ENCODE measurements at regions of chr11 and their contacts with region 1.

Region 1: GRCh38 chr11:10307442-10308207 is 2.8 kb downstream of the ADM start:
- DNase-seq: peak; percentile 84
- ATAC-seq: peak; percentile 41
- H3K4me3 ChIP-seq: peak overlapping the region; percentile 85 to 93
- H3K27ac ChIP-seq: peak overlapping the region; percentile 97
- H3K4me1 ChIP-seq: peaks cover 42 to 64% of the 10 kb centered on the region in 2 experiments
- H3K27me3 ChIP-seq: no peaks in the 10 kb centered on the region
- CTCF ChIP-seq: peak in 2 of 3 experiments; percentile 94 to 98; a peak in 4 of 6 replicates
- POLR2A ChIP-seq: peak; percentile 11
- RAD21 ChIP-seq: no peak

Region 2: GRCh38 chr11:9757809-9758636 is 549.6 kb before region 1 on chr11:
- CTCF ChIA-PET with region 1: interaction called, 18 read pairs
- POLR2A ChIA-PET with region 1: interaction called, 37 read pairs
- RAD21 ChIA-PET with region 1: interaction called, 6 read pairs
- intact Hi-C with region 1: loop called (anchors 1 kb)
- DNase-seq: peak; percentile 42
- ATAC-seq: peak; percentile 59
- H3K4me3 ChIP-seq: peak overlapping the region; percentile 71 to 74
- H3K27ac ChIP-seq: peak overlapping the region; percentile 95
- H3K4me1 ChIP-seq: peaks cover 17 to 34% of the 10 kb centered on the region in 2 experiments
- H3K27me3 ChIP-seq: no peaks in the 10 kb centered on the region
- CTCF ChIP-seq: peak in 2 of 3 experiments; percentile 55 to 66; a peak in 4 of 6 replicates
- POLR2A ChIP-seq: no peak
- RAD21 ChIP-seq: peak; percentile 65

Region 3: DNA sequence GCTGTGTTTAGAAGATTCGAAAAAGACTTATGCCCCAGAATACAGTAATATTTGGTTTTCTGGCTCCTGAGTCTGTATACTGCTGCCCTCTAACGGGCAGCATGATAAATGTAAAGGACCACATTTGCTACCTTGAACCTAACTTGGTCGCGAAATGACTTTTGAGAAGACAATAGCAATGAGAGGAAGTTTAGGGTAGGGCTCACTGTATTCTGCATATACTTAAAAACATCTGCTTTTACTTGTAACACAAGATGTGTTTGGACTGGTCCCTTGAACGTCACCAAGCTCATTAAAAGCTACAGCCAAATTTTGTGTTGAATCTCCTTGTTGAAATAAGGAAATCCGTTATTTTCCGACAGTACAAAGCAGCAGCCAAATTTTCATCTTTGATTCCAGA is 334.6 kb before region 1 on chr11:
- CTCF ChIA-PET with region 1: interaction called, 4 read pairs
- POLR2A ChIA-PET with region 1: interaction called, 4 read pairs
- RAD21 ChIA-PET with region 1: no interaction called
- intact Hi-C with region 1: loop called (anchors 5 kb)
- DNase-seq: peak; percentile 16
- ATAC-seq: peak; percentile 67; the same call in 1 of the 2 replicates
- H3K4me3 ChIP-seq: no peak overlapping the region
- H3K27ac ChIP-seq: no peak overlapping the region
- H3K4me1 ChIP-seq: no peaks in the 10 kb centered on the region
- H3K27me3 ChIP-seq: no peaks in the 10 kb centered on the region
- CTCF ChIP-seq: peak; percentile 66 to 77 (median 69); a peak in 5 of 6 replicates
- POLR2A ChIP-seq: no peak
- RAD21 ChIP-seq: peak; percentile 80

Region 4: GRCh38 chr11:10122326-10123197 is 185.1 kb before region 1 on chr11:
- CTCF ChIA-PET with region 1: no interaction called
- POLR2A ChIA-PET with region 1: no interaction called
- RAD21 ChIA-PET with region 1: no interaction called
- intact Hi-C with region 1: no loop called
- DNase-seq: peak; percentile 77
- ATAC-seq: peak; percentile 99
- H3K4me3 ChIP-seq: peak overlapping the region in 1 of 2 experiments; percentile 26; a peak in 2 of 4 replicates
- H3K27ac ChIP-seq: peak overlapping the region; percentile 44; the same call in 1 of the 2 replicates
- H3K4me1 ChIP-seq: peaks cover 12 to 20% of the 10 kb centered on the region in 2 experiments; a peak in 3 of 4 replicates
- H3K27me3 ChIP-seq: no peaks in the 10 kb centered on the region
- CTCF ChIP-seq: no peak
- POLR2A ChIP-seq: no peak
- RAD21 ChIP-seq: no peak

Region 5: GRCh38 chr11:10181811-10182210 is 125.8 kb before region 1 on chr11:
- CTCF ChIA-PET with region 1: interaction called, 14 read pairs
- POLR2A ChIA-PET with region 1: interaction called, 19 read pairs
- RAD21 ChIA-PET with region 1: interaction called in 1 of 2 experiments, 5 read pairs
- intact Hi-C with region 1: no loop called
- DNase-seq: peak; percentile 26
- ATAC-seq: peak; percentile 49; the same call in 1 of the 2 replicates
- H3K4me3 ChIP-seq: no peak overlapping the region
- H3K27ac ChIP-seq: no peak overlapping the region
- H3K4me1 ChIP-seq: no peaks in the 10 kb centered on the region
- H3K27me3 ChIP-seq: no peaks in the 10 kb centered on the region
- CTCF ChIP-seq: peak; percentile 31 to 60 (median 36); a peak in 5 of 6 replicates
- POLR2A ChIP-seq: no peak
- RAD21 ChIP-seq: peak; percentile 55

Region 6: GRCh38 chr11:10293423-10294289 is 14.0 kb before region 1 on chr11 and contains the start of gene SBF2:
- CTCF ChIA-PET with region 1: interaction called, 8 read pairs
- POLR2A ChIA-PET with region 1: interaction called, 15 read pairs
- RAD21 ChIA-PET with region 1: no interaction called
- intact Hi-C with region 1: no loop called
- DNase-seq: no peak
- ATAC-seq: peak; percentile 84
- H3K4me3 ChIP-seq: peak within 1 kb of the TSS; percentile 77 to 78
- H3K27ac ChIP-seq: peak within 1 kb of the TSS; percentile 80
- H3K4me1 ChIP-seq: peaks cover 11 to 26% of the 10 kb centered on the region in 2 experiments
- H3K27me3 ChIP-seq: no peaks in the 10 kb centered on the region
- CTCF ChIP-seq: no peak
- POLR2A ChIP-seq: peak; percentile 22
- RAD21 ChIP-seq: no peak
- total RNA-seq, gene SBF2: 35.0 TPM

Region 7: DNA sequence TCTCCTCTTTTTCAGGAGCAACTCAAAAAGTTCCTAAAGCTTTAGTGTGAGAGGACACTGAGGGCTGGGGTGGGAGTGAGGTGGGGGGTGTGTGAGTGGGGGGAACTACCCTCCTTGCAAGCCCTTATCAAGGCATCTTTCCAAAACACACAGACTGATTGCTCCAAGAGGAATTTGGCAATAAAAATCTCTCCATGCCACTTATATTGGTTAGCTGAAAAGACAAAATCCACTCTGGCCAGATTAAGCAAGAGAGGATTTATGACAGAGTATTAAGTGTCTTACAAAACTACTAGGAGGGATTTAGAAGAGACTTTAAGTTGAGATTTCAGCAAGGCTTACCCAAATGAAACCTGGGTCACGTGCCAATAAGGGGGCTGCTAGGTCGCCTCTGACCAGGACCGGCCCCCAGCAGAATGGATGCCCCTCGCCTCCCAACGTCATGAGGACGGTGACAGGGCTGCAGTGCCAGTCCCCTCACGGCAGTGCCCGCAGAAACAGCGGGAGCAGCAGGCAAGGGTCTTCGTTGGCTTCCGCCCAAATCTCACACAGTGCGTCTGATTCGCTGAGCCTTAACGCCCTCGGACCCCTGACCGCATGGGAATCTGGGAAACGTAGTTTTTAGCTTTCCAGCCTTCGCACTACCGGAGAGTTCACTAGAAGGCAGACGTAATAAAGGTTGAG is 421.3 kb after region 1 on chr11:
- CTCF ChIA-PET with region 1: no interaction called
- POLR2A ChIA-PET with region 1: no interaction called
- RAD21 ChIA-PET with region 1: no interaction called
- intact Hi-C with region 1: no loop called
- DNase-seq: no peak
- ATAC-seq: no peak
- H3K4me3 ChIP-seq: no peak overlapping the region
- H3K27ac ChIP-seq: no peak overlapping the region; the same call in 1 of the 2 replicates
- H3K4me1 ChIP-seq: peaks cover 26 to 55% of the 10 kb centered on the region in 2 experiments
- H3K27me3 ChIP-seq: no peaks in the 10 kb centered on the region
- CTCF ChIP-seq: no peak
- POLR2A ChIP-seq: no peak
- RAD21 ChIP-seq: no peak

Measured in HCT116 (cell line).